GM12878 (cell line): ENCODE measurements at regions of chr10 and their contacts with region 1.

Region 1: DNA sequence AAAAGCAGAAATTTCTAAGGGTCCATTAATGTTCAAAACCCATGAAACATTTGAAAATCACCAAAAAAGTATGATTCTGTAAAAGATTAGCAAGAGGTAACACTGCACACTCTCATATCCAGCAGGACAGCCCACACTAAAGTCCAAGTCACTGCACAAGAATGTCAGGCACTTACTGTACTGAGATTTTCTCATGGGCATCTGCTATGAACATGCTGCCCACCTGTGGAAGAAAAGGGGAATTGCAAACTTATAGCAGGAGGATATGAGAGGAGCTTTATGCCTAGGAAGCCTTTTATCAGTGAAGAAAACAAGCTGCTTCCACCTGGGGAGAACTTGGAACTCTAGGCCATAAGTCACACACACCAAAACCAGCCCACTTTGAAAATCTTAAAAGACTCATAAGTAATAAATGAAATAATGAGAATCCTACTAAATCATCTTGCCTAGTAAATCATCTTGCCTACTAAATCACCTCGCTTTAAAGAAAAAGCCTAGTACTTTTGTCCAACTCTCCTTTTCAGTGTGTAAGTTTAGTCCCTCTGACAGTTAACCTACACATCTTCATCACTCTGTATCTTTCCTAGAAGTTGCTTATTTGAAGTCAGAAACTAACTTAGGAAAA is 46.1 kb downstream of the ARMH3 start:
- DNase-seq: peak; percentile 62
- ATAC-seq: peak; percentile 99
- H3K4me3 ChIP-seq: no peak overlapping the region
- H3K27ac ChIP-seq: no peak overlapping the region
- H3K4me1 ChIP-seq: peaks cover 9% of the 10 kb centered on the region
- H3K27me3 ChIP-seq: no peaks in the 10 kb centered on the region
- CTCF ChIP-seq: peak; percentile 97 to 99 (median 99); a peak in 5 of 6 replicates
- EP300 ChIP-seq: no peak
- POLR2A ChIP-seq: no peak
- RAD21 ChIP-seq: peak; percentile 100

Region 2: DNA sequence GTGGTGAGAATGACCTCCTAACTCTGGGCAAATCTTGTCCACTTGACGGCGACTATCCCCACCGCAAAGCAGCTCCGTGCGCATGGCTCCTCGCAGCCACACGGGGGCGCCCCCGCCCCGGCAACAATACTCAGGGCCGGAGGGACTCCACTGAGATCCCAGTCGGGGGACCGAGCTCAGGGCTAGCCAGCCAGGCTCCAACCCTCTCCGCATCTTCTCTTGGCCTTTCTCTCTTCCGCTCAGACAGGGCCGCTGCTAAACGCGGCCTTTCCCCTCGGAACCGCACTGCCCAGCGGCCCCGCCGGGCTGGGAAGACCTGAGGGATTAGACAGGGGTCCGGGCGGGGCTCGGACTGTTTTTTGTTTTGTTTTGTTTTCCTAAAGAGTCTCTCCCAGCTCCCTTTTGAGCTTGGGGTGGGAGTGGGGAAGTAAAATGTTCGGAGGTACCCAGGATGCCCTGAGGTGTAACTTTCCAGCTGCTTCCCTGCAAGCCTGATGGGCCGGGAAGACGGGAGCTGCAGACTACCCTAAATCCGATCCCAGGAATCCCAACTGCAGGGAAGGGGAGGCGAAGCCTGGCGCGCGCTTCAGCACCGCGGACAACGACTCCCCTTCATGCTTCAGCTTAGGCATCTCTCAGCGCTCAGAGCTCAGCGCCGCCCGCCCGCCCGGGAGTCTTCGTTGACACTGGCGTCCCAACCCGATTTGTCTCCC is 169.0 kb before region 1 on chr10:
- CTCF ChIA-PET with region 1: interaction called, 697 read pairs
- POLR2A ChIA-PET with region 1: interaction called, 25 read pairs
- RAD21 ChIA-PET with region 1: interaction called, 538 read pairs
- SMC1A ChIA-PET with region 1: interaction called, 407 read pairs
- in situ Hi-C with region 1: loop called (anchors 5 kb)
- intact Hi-C with region 1: loop called (anchors 1 kb)
- DNase-seq: no peak
- ATAC-seq: peak; percentile 90
- H3K4me3 ChIP-seq: peak overlapping the region; percentile 81
- H3K27ac ChIP-seq: no peak overlapping the region
- H3K4me1 ChIP-seq: peaks cover 23% of the 10 kb centered on the region
- H3K27me3 ChIP-seq: no peaks in the 10 kb centered on the region
- CTCF ChIP-seq: peak; percentile 98 to 99 (median 98); a peak in 5 of 6 replicates
- EP300 ChIP-seq: no peak
- POLR2A ChIP-seq: no peak
- RAD21 ChIP-seq: peak; percentile 98

Region 3: GRCh38 chr10:101879456-101880231 is 130.3 kb before region 1 on chr10:
- CTCF ChIA-PET with region 1: interaction called, 543 read pairs
- POLR2A ChIA-PET with region 1: interaction called, 5 read pairs
- RAD21 ChIA-PET with region 1: interaction called, 467 read pairs
- SMC1A ChIA-PET with region 1: interaction called, 78 read pairs
- in situ Hi-C with region 1: loop called (anchors 5 kb)
- intact Hi-C with region 1: no loop called
- DNase-seq: no peak
- ATAC-seq: no peak
- H3K4me3 ChIP-seq: no peak overlapping the region
- H3K27ac ChIP-seq: no peak overlapping the region
- H3K4me1 ChIP-seq: peaks cover 9% of the 10 kb centered on the region
- H3K27me3 ChIP-seq: no peaks in the 10 kb centered on the region
- CTCF ChIP-seq: no peak
- EP300 ChIP-seq: no peak
- POLR2A ChIP-seq: no peak
- RAD21 ChIP-seq: no peak

Region 4: DNA sequence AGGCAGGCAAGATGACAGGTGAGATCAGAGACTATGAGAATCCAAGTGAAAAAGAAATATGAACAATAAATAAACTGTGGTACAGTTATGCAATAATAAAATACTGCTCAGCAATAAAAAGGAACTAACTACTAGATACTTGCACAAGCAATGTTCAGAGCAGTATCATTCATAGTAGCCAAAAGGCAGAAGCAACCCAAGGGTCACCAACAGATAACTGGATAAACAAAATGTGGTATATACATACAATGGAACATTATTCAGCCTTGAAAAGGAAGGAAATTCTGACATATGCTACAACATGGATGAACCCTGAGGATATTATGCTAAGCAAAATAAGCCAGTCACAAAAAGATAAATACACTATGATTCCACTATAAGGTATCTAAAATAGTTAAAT is 89.4 kb before region 1 on chr10:
- CTCF ChIA-PET with region 1: interaction called, 13 read pairs
- POLR2A ChIA-PET with region 1: no interaction called
- RAD21 ChIA-PET with region 1: interaction called, 11 read pairs
- SMC1A ChIA-PET with region 1: interaction called, 16 read pairs
- in situ Hi-C with region 1: no loop called
- intact Hi-C with region 1: no loop called
- DNase-seq: no peak
- ATAC-seq: no peak
- H3K4me3 ChIP-seq: no peak overlapping the region
- H3K27ac ChIP-seq: no peak overlapping the region
- H3K4me1 ChIP-seq: peaks cover 3% of the 10 kb centered on the region; the same call in 1 of the 2 replicates
- H3K27me3 ChIP-seq: no peaks in the 10 kb centered on the region
- CTCF ChIP-seq: no peak
- EP300 ChIP-seq: no peak
- POLR2A ChIP-seq: no peak
- RAD21 ChIP-seq: no peak

Region 5: DNA sequence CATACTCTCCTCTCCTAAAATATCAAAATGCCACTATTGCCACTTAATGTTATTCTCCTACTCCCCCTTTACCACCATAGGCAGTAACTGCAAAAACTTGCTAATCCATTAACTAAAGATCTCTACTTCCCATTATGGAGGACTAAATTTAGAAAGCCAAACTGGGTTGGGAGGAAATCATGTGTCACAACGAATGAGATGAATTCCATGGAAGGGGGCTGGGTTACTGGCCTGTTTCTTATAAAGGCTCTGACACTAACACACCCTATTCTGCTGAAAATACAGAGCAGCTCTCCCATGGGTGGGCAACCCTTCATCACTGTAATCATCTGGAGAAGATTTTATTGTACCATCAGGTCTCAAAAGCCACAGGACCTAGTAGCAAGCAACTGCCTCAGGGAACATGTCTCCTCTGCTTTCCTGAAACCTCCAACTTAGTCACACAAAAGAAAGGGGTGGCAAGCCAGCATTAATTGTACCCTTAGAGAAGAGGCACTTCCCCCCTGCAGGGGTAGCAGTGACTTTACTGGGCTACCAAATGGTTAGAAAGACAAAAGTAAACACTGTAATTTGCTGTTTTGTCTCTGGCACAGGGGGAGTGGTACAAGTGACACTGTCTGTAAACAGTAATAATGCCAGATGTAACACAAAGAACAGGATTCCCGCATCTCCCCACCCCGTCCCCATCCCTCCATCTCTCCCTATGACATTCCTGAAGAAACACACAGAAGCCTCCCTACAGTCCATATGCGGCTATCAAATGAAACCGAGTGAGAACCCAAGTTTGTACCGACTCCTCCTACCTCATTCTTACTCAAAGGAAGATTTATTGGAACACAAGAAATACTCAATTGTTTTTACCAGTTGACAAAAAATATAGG is 35.6 kb before region 1 on chr10:
- CTCF ChIA-PET with region 1: interaction called, 73 read pairs
- POLR2A ChIA-PET with region 1: interaction called, 7 read pairs
- RAD21 ChIA-PET with region 1: interaction called, 13 read pairs
- SMC1A ChIA-PET with region 1: interaction called, 298 read pairs
- in situ Hi-C with region 1: no loop called
- intact Hi-C with region 1: no loop called
- DNase-seq: no peak
- ATAC-seq: no peak
- H3K4me3 ChIP-seq: 0 out of 2 replicates have a peak overlapping the region, but pooled peaks have one; percentile 42
- H3K27ac ChIP-seq: peak overlapping the region; percentile 99
- H3K4me1 ChIP-seq: peaks cover 50% of the 10 kb centered on the region
- H3K27me3 ChIP-seq: no peaks in the 10 kb centered on the region
- CTCF ChIP-seq: no peak
- EP300 ChIP-seq: no peak
- POLR2A ChIP-seq: no peak
- RAD21 ChIP-seq: no peak

Region 6: DNA sequence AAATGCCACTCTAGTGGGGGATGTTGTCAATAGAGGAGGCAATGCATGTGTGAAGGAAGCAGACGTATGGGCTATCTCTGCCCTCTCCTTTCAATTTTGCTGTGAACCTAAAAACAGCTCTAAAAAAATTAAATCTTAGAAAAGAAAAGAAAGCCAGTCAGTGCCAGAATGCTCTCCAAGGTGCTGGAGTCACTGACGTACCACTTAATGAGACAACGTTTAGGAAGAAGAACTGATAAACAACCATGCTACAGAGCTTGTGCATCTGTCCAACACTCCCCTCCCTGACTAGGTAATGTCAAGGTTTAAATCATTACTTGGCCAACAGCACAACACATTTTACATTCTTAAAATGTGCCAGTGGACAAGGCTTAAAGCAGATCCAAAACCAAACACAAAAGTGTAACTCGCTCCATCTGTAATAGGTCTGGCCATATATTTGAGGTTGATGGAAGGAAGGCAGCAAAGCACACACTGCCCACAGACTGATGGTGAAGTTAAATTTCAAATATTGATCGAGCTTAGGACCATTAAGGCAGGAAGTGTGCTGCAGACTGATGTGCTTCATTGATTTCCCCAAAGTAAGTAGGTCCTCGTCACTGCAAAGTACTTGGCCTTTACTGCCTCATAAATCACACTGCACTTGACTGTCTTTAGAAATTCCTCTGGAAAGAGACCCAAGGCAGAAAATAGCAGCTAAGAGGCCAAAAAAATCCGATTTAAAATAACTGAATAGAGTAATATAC is 30.6 kb after region 1 on chr10:
- CTCF ChIA-PET with region 1: interaction called, 6 read pairs
- POLR2A ChIA-PET with region 1: no interaction called
- RAD21 ChIA-PET with region 1: no interaction called
- SMC1A ChIA-PET with region 1: interaction called, 10 read pairs
- in situ Hi-C with region 1: no loop called
- intact Hi-C with region 1: no loop called
- DNase-seq: no peak
- ATAC-seq: no peak
- H3K4me3 ChIP-seq: no peak overlapping the region
- H3K27ac ChIP-seq: no peak overlapping the region
- H3K4me1 ChIP-seq: no peaks in the 10 kb centered on the region
- H3K27me3 ChIP-seq: no peaks in the 10 kb centered on the region
- CTCF ChIP-seq: no peak
- EP300 ChIP-seq: no peak
- POLR2A ChIP-seq: no peak
- RAD21 ChIP-seq: no peak